ENCODE measurements at regions of chr12 and their contacts with region 1.

Region 1: GRCh38 chr12:9619411-9620179 is 11.9 kb upstream of the KLRB1 start:
- DNase-seq: no peak

Region 2: GRCh38 chr12:9001233-9001632 is 618.4 kb before region 1 on chr12:
- intact Hi-C with region 1: loop called in 1 of 2 experiments (anchors 10 kb)
- DNase-seq: no peak

Region 3: DNA sequence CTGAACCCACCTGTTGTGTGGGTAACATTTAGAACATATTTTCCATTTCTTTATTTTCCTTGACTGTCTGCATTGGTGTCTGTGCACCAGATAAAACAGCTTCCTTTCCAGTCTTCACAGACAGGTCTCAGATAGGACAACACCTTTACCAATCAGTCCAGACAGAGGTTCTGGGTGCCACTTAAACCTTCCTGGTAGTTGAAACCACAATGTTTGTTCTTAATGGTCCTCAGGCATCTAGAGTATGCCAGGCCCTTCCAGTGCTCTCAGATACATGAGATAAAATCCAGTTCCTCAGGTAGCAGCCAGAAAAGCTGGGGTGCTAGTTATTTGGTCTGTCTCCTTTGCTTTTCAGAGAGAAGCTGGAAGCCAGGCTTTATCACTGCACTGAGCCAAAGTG is 42.9 kb after region 1 on chr12:
- intact Hi-C with region 1: no loop called
- DNase-seq: no peak

Region 4: DNA sequence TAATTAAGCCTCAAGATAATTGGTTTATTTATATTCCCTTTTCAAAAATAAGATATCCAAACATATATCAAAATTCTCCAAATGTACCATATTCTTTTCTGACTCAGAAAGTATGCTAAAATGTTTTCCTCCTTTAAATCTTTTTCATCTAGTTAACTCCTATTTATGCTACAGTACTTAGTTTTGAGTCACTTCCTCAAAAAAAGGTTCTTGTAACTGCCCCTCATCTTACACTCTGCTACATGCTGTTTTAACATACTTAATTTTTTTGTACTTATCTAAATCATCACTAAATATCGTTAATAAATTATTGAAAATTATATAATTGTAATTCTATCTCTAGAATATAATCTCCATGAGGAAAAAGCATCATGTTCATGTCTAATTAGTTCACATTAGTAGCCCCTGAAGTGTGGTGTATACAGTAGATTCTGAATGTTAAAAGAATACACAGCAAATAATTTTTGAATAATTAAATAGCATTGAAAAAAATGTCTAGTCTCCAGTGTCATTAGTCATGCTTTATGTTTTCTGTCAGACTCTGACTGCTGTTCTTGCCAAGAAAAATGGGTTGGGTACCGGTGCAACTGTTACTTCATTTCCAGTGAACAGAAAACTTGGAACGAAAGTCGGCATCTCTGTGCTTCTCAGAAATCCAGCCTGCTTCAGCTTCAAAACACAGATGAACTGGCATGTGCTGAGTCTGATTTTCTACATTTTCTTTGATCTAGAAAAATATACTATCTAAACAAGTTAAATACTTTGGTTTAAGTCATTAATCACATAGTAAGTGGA is 691.5 kb after region 1 on chr12:
- intact Hi-C with region 1: no loop called
- DNase-seq: no peak

Measured in posterior vena cava (tissue), 2 donors.